HepG2 (cell line): ENCODE measurements at regions of chr4 and their contacts with region 1.

Region 1: GRCh38 chr4:992297-993110 is 700 bp downstream of the SLC26A1 start:
- DNase-seq: peak; percentile 98
- ATAC-seq: peak; percentile 81
- H3K4me3 ChIP-seq: peak overlapping the region; percentile 61 to 85 (median 77)
- H3K27ac ChIP-seq: peak overlapping the region; percentile 99
- H3K4me1 ChIP-seq: peaks cover 56% of the 10 kb centered on the region
- H3K27me3 ChIP-seq: peaks cover 0 to under 1% of the 10 kb centered on the region in 2 experiments; a peak in 2 of 5 replicates
- CTCF ChIP-seq: peak; percentile 31; the same call in 1 of the 2 replicates
- EP300 ChIP-seq: peak; percentile 63 to 75; a peak in 3 of 4 replicates
- POLR2A ChIP-seq: peak in 1 of 2 experiments; percentile 91; a peak in 2 of 4 replicates
- RAD21 ChIP-seq: peak; percentile 42

Region 2: GRCh38 chr4:732911-733630 is 259.4 kb before region 1 on chr4:
- CTCF ChIA-PET with region 1: no interaction called
- POLR2A ChIA-PET with region 1: no interaction called
- in situ Hi-C with region 1: no loop called
- intact Hi-C with region 1: no loop called
- DNase-seq: no peak
- ATAC-seq: peak; percentile 19; the same call in 1 of the 3 replicates
- H3K4me3 ChIP-seq: no peak overlapping the region
- H3K27ac ChIP-seq: no peak overlapping the region
- H3K4me1 ChIP-seq: no peaks in the 10 kb centered on the region
- H3K27me3 ChIP-seq: no peaks in the 10 kb centered on the region
- CTCF ChIP-seq: no peak
- EP300 ChIP-seq: no peak
- POLR2A ChIP-seq: no peak
- RAD21 ChIP-seq: no peak

Region 3: GRCh38 chr4:973431-974397 is 18.8 kb before region 1 on chr4 and contains the start of gene DGKQ:
- CTCF ChIA-PET with region 1: no interaction called
- POLR2A ChIA-PET with region 1: interaction called, 3 read pairs
- in situ Hi-C with region 1: no loop called
- intact Hi-C with region 1: loop called (anchors 2 kb)
- DNase-seq: peak; percentile 48
- ATAC-seq: peak; percentile 67
- H3K4me3 ChIP-seq: peak within 1 kb of the TSS; percentile 74 to 87 (median 81)
- H3K27ac ChIP-seq: no peak within 1 kb of the TSS
- H3K4me1 ChIP-seq: peaks cover 21% of the 10 kb centered on the region
- H3K27me3 ChIP-seq: peaks cover 0 to 3% of the 10 kb centered on the region in 2 experiments; a peak in 2 of 5 replicates
- CTCF ChIP-seq: no peak
- EP300 ChIP-seq: no peak
- POLR2A ChIP-seq: no peak
- RAD21 ChIP-seq: no peak
- total RNA-seq, gene DGKQ: 3.2 and 7.2 TPM in 2 replicates

Region 4: DNA sequence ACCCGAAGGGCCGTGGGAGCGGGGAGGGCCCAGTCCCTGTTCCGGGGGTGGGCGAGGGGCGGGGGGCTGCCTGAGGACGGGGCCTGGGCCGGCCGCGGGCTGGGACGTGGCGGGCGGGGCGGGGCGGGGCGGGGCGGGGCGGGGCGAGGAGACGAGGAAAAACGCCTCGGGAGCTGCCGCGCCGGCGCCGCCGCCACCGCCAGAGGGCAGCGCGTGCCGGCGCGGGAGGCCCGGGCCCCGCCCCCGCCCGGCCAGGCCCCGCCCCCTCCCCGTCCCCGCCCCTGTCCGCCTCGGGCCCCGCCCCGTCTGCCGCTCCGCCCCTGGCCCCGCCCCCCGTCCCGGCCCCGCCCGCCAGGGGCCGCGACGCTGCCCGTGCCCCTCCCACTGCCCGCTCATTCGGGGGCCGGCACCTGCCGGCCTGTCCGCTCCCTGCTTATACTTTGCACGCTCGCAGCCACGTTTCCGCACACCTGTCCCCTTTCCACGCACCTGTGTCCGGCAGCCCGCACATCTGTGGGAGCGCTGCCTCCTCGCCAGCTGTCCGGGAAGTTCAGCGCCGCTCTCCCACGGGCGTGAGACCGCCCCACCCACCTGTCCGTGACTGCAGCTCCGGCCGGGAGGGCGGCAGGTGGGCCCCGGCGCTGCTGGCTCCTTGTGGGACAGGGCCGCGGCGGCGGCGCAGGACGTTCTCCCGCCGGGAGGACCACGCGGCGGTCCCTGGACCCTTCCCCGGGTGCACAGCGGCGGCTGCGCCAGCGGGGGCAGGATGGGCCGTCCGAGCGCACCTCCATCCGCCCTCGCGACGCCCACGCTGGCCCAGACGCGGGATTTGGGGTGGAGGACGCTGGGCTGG is 17.3 kb after region 1 on chr4:
- CTCF ChIA-PET with region 1: no interaction called
- POLR2A ChIA-PET with region 1: interaction called, 9 read pairs
- in situ Hi-C with region 1: no loop called
- intact Hi-C with region 1: loop called (anchors 2 kb)
- DNase-seq: no peak
- ATAC-seq: peak; percentile 27
- H3K4me3 ChIP-seq: peak overlapping the region; percentile 69 to 89 (median 73); a peak in 5 of 6 replicates
- H3K27ac ChIP-seq: no peak overlapping the region
- H3K4me1 ChIP-seq: peaks cover 50% of the 10 kb centered on the region
- H3K27me3 ChIP-seq: peaks cover 7 to 33% of the 10 kb centered on the region in 2 experiments
- CTCF ChIP-seq: no peak
- EP300 ChIP-seq: no peak
- POLR2A ChIP-seq: no peak
- RAD21 ChIP-seq: 0 out of 2 replicates have a peak, but pooled peaks have one; percentile 27